GM12878 (cell line): ENCODE measurements at regions of chr3 and their contacts with region 1.

Region 1: GRCh38 chr3:143158014-143158988 is 38.7 kb downstream of the CHST2 start:
- DNase-seq: peak; percentile 67
- ATAC-seq: peak; percentile 88
- H3K4me3 ChIP-seq: no peak overlapping the region
- H3K27ac ChIP-seq: peak overlapping the region; percentile 3; the same call in 1 of the 2 replicates
- H3K4me1 ChIP-seq: peaks cover 22% of the 10 kb centered on the region
- H3K27me3 ChIP-seq: no peaks in the 10 kb centered on the region
- CTCF ChIP-seq: 0 out of 6 replicates have a peak, but pooled peaks of 1 of the 3 experiments have one; percentile 13
- EP300 ChIP-seq: peak; percentile 57 to 68; a peak in 1 of 4 replicates
- POLR2A ChIP-seq: no peak
- RAD21 ChIP-seq: peak; percentile 49

Region 2: DNA sequence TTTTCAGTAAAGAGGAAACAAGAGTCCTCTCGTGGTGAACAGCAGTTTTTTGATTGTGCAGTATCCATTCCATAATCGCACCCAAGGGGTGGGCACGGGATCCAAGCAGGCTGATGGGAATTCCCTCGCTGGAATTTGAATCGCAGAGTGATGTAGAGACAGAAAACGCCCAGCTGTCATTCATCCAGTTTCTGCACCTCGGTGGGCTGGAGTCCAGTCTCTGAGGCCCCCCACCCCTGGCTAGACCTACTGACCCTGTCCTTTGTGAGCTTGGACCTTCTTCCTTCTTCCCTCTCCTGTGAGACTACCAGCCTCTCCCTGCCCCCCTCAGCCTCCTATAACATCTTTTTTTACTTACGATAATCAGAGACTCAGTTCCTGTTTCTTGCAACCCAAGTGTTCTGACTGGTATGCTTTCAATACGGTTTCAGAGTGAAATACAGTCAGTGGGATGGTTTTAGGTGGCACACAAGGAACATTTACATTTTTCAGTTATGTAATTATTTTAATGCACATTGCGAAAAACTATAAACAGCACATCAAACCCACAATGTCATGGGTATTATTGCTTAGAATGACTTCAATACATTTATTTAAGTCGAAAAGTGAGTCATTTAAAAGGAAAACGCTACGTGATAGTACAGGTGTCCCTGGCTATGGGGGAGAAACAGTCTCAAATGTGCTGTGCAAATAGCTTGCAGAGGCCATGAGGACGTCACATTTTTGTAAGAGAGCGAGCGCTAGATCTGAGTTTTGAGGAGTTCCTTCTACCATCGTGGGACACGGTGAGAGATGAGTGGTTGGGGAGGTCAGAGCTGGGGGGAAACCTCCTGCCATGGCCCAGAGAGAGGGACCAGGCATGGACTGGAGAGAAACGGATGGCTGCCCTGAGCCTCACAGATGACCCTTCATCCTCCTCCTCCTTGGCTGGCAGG is 76.2 kb before region 1 on chr3:
- CTCF ChIA-PET with region 1: no interaction called
- POLR2A ChIA-PET with region 1: no interaction called
- RAD21 ChIA-PET with region 1: no interaction called
- SMC1A ChIA-PET with region 1: no interaction called
- in situ Hi-C with region 1: no loop called
- intact Hi-C with region 1: loop called (anchors 2 kb)
- DNase-seq: peak; percentile 94
- ATAC-seq: peak; percentile 81
- H3K4me3 ChIP-seq: peak overlapping the region; percentile 51; the same call in 1 of the 2 replicates
- H3K27ac ChIP-seq: peak overlapping the region; percentile 92
- H3K4me1 ChIP-seq: peaks cover 35% of the 10 kb centered on the region
- H3K27me3 ChIP-seq: no peaks in the 10 kb centered on the region
- CTCF ChIP-seq: no peak
- EP300 ChIP-seq: peak; percentile 91 to 93
- POLR2A ChIP-seq: peak; percentile 23
- RAD21 ChIP-seq: no peak

Region 3: DNA sequence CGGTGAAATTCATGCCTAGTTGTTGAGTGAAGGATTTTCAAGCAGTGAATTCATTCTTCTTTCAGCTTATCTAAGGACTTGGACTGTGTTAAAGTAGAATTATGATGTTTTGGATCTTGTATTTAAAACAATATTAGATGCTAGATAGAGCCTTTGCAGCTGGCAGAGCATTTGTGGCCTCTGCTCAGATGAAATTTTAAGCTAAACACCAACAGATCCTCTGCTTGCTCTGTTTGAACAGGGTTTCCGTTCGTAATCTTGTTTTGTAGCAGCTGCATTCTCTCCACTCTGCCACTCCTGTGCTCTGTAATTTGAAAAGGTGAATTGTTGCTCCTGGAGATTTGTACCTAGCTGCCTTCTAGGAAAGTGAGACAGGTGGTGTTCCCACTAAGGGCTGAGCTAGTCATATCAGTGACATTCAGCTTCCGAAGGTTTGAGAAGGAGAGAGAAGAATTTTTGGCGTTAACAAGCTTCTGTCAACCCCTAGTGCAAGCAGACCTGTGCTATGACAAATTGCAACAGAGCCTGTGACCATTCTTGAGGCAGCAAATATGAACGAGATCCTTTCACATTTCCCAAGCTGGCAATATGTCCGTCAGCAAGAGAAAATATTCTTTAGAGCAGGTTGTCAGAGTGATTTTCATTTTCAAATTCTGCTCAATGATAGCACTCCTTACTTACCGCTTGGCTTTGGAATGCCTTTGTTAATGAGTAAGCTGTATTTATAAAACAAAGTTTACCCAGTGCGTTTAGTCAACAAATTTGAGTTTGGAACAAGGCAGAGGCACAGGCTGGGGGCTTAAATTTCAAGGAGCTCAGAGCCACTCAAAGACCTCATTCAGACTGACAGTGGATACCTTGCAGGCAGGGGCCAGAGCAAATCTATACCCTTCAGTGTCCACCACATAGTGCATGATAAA is 33.4 kb before region 1 on chr3:
- CTCF ChIA-PET with region 1: interaction called, 4 read pairs
- POLR2A ChIA-PET with region 1: interaction called, 4 read pairs
- RAD21 ChIA-PET with region 1: interaction called, 13 read pairs
- SMC1A ChIA-PET with region 1: interaction called, 41 read pairs
- in situ Hi-C with region 1: no loop called
- intact Hi-C with region 1: loop called (anchors 1 kb)
- DNase-seq: no peak
- ATAC-seq: no peak
- H3K4me3 ChIP-seq: no peak overlapping the region
- H3K27ac ChIP-seq: no peak overlapping the region
- H3K4me1 ChIP-seq: peaks cover 27% of the 10 kb centered on the region
- H3K27me3 ChIP-seq: no peaks in the 10 kb centered on the region
- CTCF ChIP-seq: no peak
- EP300 ChIP-seq: no peak
- POLR2A ChIP-seq: no peak
- RAD21 ChIP-seq: no peak

Region 4: GRCh38 chr3:143171141-143171970 is 13.1 kb after region 1 on chr3:
- CTCF ChIA-PET with region 1: interaction called, 8 read pairs
- POLR2A ChIA-PET with region 1: interaction called, 3 read pairs
- RAD21 ChIA-PET with region 1: interaction called, 4 read pairs
- SMC1A ChIA-PET with region 1: interaction called, 39 read pairs
- in situ Hi-C with region 1: no loop called
- intact Hi-C with region 1: no loop called
- DNase-seq: peak; percentile 77
- ATAC-seq: peak; percentile 85
- H3K4me3 ChIP-seq: no peak overlapping the region
- H3K27ac ChIP-seq: peak overlapping the region; percentile 82
- H3K4me1 ChIP-seq: peaks cover 35% of the 10 kb centered on the region
- H3K27me3 ChIP-seq: no peaks in the 10 kb centered on the region
- CTCF ChIP-seq: peak in 1 of 3 experiments; percentile 5; a peak in 1 of 6 replicates
- EP300 ChIP-seq: no peak
- POLR2A ChIP-seq: no peak
- RAD21 ChIP-seq: peak; percentile 14; the same call in 1 of the 2 replicates

Region 5: GRCh38 chr3:143276592-143276991 is 118.3 kb after region 1 on chr3:
- CTCF ChIA-PET with region 1: no interaction called
- POLR2A ChIA-PET with region 1: no interaction called
- RAD21 ChIA-PET with region 1: no interaction called
- SMC1A ChIA-PET with region 1: no interaction called
- in situ Hi-C with region 1: no loop called
- intact Hi-C with region 1: no loop called
- DNase-seq: no peak
- ATAC-seq: peak; percentile 91
- H3K4me3 ChIP-seq: no peak overlapping the region
- H3K27ac ChIP-seq: no peak overlapping the region
- H3K4me1 ChIP-seq: no peaks in the 10 kb centered on the region
- H3K27me3 ChIP-seq: no peaks in the 10 kb centered on the region
- CTCF ChIP-seq: no peak
- EP300 ChIP-seq: no peak
- POLR2A ChIP-seq: no peak
- RAD21 ChIP-seq: no peak

Region 6: GRCh38 chr3:143484851-143485512 is 326.7 kb after region 1 on chr3:
- CTCF ChIA-PET with region 1: no interaction called
- POLR2A ChIA-PET with region 1: no interaction called
- RAD21 ChIA-PET with region 1: no interaction called
- SMC1A ChIA-PET with region 1: no interaction called
- in situ Hi-C with region 1: no loop called
- intact Hi-C with region 1: no loop called
- DNase-seq: no peak
- ATAC-seq: peak; percentile 36; the same call in 1 of the 3 replicates
- H3K4me3 ChIP-seq: no peak overlapping the region
- H3K27ac ChIP-seq: no peak overlapping the region
- H3K4me1 ChIP-seq: peaks cover 4% of the 10 kb centered on the region; the same call in 1 of the 2 replicates
- H3K27me3 ChIP-seq: no peaks in the 10 kb centered on the region
- CTCF ChIP-seq: no peak
- EP300 ChIP-seq: no peak
- POLR2A ChIP-seq: no peak
- RAD21 ChIP-seq: no peak